CD14-positive monocyte (primary cell): ENCODE measurements at regions of chr14 and their contacts with region 1.

Region 1: DNA sequence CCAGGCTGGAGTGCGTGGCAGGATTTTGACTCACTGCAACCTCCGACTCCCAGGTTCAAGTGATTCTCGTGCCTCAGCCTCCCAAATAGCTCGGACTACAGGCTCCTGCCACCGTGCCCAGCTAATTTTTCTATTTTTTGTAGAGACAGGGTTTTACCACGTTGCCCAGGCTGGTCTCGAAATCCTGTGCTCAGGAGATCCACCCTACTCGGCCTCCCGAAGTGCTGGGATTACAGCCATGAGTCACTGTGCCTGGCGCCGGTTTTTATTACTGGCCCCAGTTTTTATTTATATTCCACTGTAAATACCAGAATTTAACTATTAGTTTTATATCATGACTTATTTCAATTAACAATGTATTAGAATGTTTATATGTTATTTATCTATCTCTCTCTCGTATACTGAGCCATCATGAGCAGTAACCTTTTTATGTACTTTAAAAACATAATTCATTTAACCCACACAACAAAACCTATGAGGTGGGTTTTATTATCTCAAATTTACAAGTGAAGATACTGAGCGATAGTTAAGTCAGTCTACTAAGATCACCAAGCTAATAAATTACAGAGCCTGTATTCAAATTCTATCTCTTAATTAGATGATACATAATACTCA is 47.8 kb downstream of the HECTD1 start:
- DNase-seq: no peak
- H3K4me3 ChIP-seq: no peak overlapping the region
- H3K4me3 Mint-ChIP-seq: no peak overlapping the region
- H3K27ac ChIP-seq: no peak overlapping the region
- H3K27ac Mint-ChIP-seq: no peak overlapping the region
- H3K4me1 ChIP-seq: no peaks in the 10 kb centered on the region
- H3K4me1 Mint-ChIP-seq: no peaks in the 10 kb centered on the region
- H3K27me3 ChIP-seq: no peaks in the 10 kb centered on the region
- H3K27me3 Mint-ChIP-seq: no peaks in the 10 kb centered on the region
- CTCF ChIP-seq: no peak

Region 2: DNA sequence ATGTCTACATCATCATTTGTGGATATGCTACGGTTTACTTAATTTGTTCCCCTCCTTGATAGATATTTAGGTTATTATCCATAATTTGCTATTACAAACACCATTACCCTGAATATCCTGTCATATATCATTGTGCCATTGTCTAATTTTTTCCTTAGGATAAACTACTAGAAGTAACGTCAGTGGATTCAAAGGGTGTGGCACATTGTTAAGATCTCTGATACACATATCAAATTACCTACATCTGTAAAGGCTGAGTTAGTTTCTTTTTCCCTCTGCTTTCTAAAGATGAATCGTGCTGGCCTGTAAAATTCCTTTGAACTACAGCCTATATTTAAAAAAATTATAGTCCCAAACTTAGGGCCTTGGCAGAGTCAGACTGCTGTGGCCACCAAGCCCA is 79.7 kb before region 1 on chr14:
- intact Hi-C with region 1: no loop called
- DNase-seq: no peak
- H3K4me3 ChIP-seq: no peak overlapping the region
- H3K4me3 Mint-ChIP-seq: no peak overlapping the region
- H3K27ac ChIP-seq: no peak overlapping the region
- H3K27ac Mint-ChIP-seq: no peak overlapping the region
- H3K4me1 ChIP-seq: no peaks in the 10 kb centered on the region
- H3K4me1 Mint-ChIP-seq: peaks cover 4% of the 10 kb centered on the region
- H3K27me3 ChIP-seq: no peaks in the 10 kb centered on the region
- H3K27me3 Mint-ChIP-seq: no peaks in the 10 kb centered on the region
- CTCF ChIP-seq: no peak

Region 3: DNA sequence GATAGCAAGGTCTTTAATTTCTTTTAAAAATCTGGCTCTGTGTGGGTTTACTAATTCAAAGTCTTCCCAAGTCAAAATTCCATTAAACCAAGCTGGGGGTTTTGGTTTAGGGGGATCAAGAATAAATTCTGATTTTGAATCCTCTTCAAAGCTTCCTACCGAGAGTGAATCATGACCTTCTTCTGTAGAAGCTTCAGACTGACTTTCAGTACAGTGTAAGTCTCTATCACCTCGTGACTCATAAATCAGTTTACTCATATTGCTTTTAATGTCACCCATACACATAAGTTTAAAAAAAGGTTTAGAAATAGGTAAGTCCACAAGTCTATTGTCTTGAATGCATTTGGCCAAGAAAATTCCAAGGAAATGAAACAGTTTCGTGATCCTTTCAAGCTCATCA is 53.0 kb before region 1 on chr14:
- intact Hi-C with region 1: loop called in 1 of 2 experiments (anchors 10 kb)
- DNase-seq: no peak
- H3K4me3 ChIP-seq: no peak overlapping the region
- H3K4me3 Mint-ChIP-seq: no peak overlapping the region
- H3K27ac ChIP-seq: no peak overlapping the region
- H3K27ac Mint-ChIP-seq: no peak overlapping the region
- H3K4me1 ChIP-seq: peaks cover 4 to 11% of the 10 kb centered on the region in 2 donors
- H3K4me1 Mint-ChIP-seq: peaks cover 10% of the 10 kb centered on the region
- H3K27me3 ChIP-seq: no peaks in the 10 kb centered on the region
- H3K27me3 Mint-ChIP-seq: peaks cover 0 to 1% (median 0%) of the 10 kb centered on the region in 3 donors
- CTCF ChIP-seq: no peak

Region 4: DNA sequence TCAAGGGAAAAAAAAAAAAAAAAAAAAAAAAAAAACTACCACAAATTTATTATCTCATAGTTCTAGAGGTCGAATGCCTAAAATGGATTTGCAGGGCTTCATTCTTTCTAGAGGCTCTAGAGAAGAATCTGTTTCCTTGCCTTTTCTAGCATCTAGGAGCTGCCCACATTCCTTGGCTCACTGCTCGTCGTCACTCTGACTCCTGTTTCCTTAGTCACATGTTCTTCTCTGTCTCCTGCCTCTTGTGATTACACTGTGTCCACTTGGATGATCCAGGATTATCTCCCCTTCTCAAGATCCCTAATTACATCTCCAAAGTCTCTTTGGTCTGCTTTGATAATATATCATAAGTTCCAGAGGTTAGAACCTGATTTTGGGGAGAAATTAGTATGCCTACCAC is 40.9 kb before region 1 on chr14:
- intact Hi-C with region 1: loop called in 1 of 2 experiments (anchors 5 kb)
- DNase-seq: no peak
- H3K4me3 ChIP-seq: no peak overlapping the region
- H3K4me3 Mint-ChIP-seq: no peak overlapping the region
- H3K27ac ChIP-seq: no peak overlapping the region
- H3K27ac Mint-ChIP-seq: peak overlapping the region in 2 of 7 donors; percentile 12 to 52
- H3K4me1 ChIP-seq: no peaks in the 10 kb centered on the region
- H3K4me1 Mint-ChIP-seq: no peaks in the 10 kb centered on the region
- H3K27me3 ChIP-seq: no peaks in the 10 kb centered on the region
- H3K27me3 Mint-ChIP-seq: no peaks in the 10 kb centered on the region
- CTCF ChIP-seq: no peak

Region 5: GRCh38 chr14:31357279-31357678 is 197.5 kb after region 1 on chr14:
- intact Hi-C with region 1: loop called in 1 of 2 experiments (anchors 10 kb)
- DNase-seq: peak in 2 of 3 donors; percentile 11 to 29
- H3K4me3 ChIP-seq: no peak overlapping the region
- H3K4me3 Mint-ChIP-seq: no peak overlapping the region
- H3K27ac ChIP-seq: no peak overlapping the region
- H3K27ac Mint-ChIP-seq: no peak overlapping the region
- H3K4me1 ChIP-seq: peaks cover 13 to 23% of the 10 kb centered on the region in 2 donors
- H3K4me1 Mint-ChIP-seq: peaks cover 11% of the 10 kb centered on the region
- H3K27me3 ChIP-seq: no peaks in the 10 kb centered on the region
- H3K27me3 Mint-ChIP-seq: peaks cover 0 to 9% (median 2%) of the 10 kb centered on the region in 3 donors
- CTCF ChIP-seq: no peak

Region 6: GRCh38 chr14:31659278-31659677 is 499.5 kb after region 1 on chr14:
- intact Hi-C with region 1: no loop called
- DNase-seq: no peak
- H3K4me3 ChIP-seq: no peak overlapping the region
- H3K4me3 Mint-ChIP-seq: no peak overlapping the region
- H3K27ac ChIP-seq: no peak overlapping the region
- H3K27ac Mint-ChIP-seq: no peak overlapping the region
- H3K4me1 ChIP-seq: no peaks in the 10 kb centered on the region
- H3K4me1 Mint-ChIP-seq: no peaks in the 10 kb centered on the region
- H3K27me3 ChIP-seq: no peaks in the 10 kb centered on the region
- H3K27me3 Mint-ChIP-seq: no peaks in the 10 kb centered on the region
- CTCF ChIP-seq: no peak